Kidney (tissue), 22 donors: ENCODE measurements at regions of chr11 and their contacts with region 1.

Region 1: GRCh38 chr11:11923828-11924227 is 82.1 kb downstream of the USP47 start:
- DNase-seq: no peak
- H3K4me3 ChIP-seq: no peak overlapping the region
- H3K27ac ChIP-seq: no peak overlapping the region
- H3K4me1 ChIP-seq: no peaks in the 10 kb centered on the region
- H3K27me3 ChIP-seq: no peaks in the 10 kb centered on the region
- CTCF ChIP-seq: no peak

Region 2: GRCh38 chr11:11493698-11494097 is 430.1 kb before region 1 on chr11:
- intact Hi-C with region 1: no loop called
- DNase-seq: no peak
- H3K4me3 ChIP-seq: no peak overlapping the region
- H3K27ac ChIP-seq: no peak overlapping the region
- H3K4me1 ChIP-seq: peaks cover 0 to 4% (median 0%) of the 10 kb centered on the region in 3 donors
- H3K27me3 ChIP-seq: no peaks in the 10 kb centered on the region
- CTCF ChIP-seq: no peak

Region 3: GRCh38 chr11:11584446-11584810 is 339.4 kb before region 1 on chr11:
- intact Hi-C with region 1: no loop called
- DNase-seq: no peak
- H3K4me3 ChIP-seq: no peak overlapping the region
- H3K27ac ChIP-seq: no peak overlapping the region
- H3K4me1 ChIP-seq: peaks cover 0 to 19% (median 10%) of the 10 kb centered on the region in 3 donors
- H3K27me3 ChIP-seq: no peaks in the 10 kb centered on the region
- CTCF ChIP-seq: no peak

Region 4: GRCh38 chr11:12043959-12044819 is 120.4 kb after region 1 on chr11:
- intact Hi-C with region 1: no loop called
- DNase-seq: peak; percentile 82 to 88 (median 85)
- H3K4me3 ChIP-seq: peak overlapping the region in 1 of 3 donors; percentile 23
- H3K27ac ChIP-seq: peak overlapping the region in 1 of 2 donors; percentile 45
- H3K4me1 ChIP-seq: peaks cover 0 to 2% (median 0%) of the 10 kb centered on the region in 3 donors
- H3K27me3 ChIP-seq: no peaks in the 10 kb centered on the region
- CTCF ChIP-seq: peak; percentile 93

Region 5: DNA sequence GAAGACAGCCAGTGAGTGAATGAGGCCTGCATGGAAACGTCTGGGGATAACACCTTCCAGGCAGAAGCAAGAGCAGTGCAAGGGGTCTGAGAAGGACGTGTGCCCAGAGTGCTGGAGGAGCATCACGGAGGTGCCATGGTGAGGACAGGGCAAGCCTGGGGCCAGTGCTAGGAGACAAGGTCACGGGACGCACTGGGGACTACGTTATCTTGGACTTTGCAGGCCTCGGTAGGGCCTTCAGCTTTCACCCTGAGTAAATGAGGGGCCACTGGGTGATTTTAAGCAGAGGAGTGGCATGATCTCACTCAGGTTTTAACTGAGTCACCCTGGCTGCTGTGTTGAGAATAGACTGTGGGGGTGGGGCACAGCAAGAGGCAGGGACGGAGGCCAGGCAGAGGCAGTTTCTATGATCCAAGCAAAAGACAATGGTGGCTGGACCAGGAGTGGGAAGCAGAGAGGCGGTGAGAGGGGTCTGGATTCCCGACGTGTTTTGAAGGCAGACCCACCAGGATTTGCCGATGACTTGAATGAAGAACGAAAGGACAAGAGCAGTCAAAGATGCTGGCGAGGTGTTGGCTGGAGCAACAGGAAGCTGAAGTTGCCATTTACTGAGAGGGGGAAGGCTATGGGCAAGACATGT is 350.9 kb after region 1 on chr11:
- intact Hi-C with region 1: loop called (anchors 10 kb)
- DNase-seq: peak in 1 of 5 donors; percentile 24
- H3K4me3 ChIP-seq: no peak overlapping the region
- H3K27ac ChIP-seq: no peak overlapping the region
- H3K4me1 ChIP-seq: no peaks in the 10 kb centered on the region
- H3K27me3 ChIP-seq: no peaks in the 10 kb centered on the region
- CTCF ChIP-seq: no peak